AG04449 (cell line): ENCODE measurements at regions of chr12 and their contacts with region 1.

Region 1: DNA sequence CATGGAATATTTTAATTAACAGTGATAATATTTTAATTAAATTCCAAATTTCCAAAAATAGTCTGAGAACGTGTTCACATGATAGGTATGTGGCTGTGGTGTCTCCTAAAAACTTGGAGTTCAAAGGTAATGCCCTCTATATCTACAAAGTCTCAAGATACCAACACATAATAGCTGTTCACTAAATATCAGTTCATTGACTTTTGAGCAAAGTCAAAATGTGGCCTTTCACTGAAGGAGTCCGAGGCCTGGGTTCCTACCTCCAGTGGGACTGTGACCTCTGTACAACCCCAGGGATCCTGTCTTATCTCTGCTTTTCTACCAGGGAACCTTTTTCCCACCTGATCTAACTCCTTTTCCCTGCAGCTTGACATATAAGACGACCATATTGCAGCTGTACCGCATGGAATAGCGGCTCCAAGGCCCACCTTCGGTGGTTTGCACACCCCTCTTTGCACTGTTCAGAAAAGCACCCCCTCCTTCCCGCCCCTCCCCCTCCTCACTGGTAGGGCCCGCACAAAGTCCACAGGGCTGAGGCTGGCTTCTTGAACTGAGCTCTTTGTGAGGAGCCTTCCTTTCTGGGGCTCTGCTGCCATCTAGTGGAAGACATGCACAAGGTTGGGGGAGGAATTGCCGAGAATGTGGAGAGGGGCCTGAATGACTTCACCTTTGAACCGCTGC is 3.1 kb downstream of the CCND2 start:
- DNase-seq: peak; percentile 7
- H3K4me3 ChIP-seq: no peak overlapping the region
- CTCF ChIP-seq: peak; percentile 89

Region 2: DNA sequence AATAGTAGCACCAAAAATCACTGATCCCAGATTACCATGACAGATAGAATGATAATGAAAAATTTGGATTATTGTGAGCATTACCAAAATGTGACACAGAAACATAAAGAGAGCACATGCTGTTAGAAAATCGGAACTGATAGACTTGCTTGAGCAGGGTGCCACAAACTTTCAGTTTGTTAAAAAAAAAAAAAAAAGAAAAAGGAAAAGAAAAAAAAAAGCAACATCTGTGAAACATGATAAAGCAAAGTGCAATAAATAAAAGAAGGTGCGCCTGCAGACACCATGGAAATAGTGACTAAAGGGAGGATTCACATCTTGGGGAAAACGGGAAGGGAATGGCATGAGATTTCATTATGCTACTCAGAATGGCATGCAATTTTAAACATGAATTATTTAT is 396.8 kb before region 1 on chr12:
- CTCF ChIA-PET with region 1: interaction called, 241 read pairs
- POLR2A ChIA-PET with region 1: no interaction called
- DNase-seq: no peak
- H3K4me3 ChIP-seq: no peak overlapping the region
- CTCF ChIP-seq: no peak

Region 3: DNA sequence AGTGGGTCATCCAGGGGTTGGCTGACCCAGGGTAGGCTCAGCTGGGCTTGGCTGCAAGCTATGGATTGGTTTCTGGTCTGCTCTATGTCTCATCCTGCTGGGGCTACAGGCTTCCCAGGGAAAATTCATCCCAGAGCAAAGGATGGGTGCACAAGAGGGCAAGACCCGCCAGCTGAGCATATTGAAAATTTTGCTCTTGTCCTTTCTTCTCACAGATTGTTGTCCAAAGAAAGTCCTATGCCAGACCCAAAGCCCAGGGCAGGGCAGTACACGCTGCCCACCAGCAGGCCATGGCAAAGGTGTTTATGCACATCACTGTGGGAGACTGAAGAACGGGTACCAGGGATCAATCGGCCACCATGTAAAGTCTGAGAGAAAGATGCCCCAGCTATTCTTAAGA is 308.1 kb before region 1 on chr12:
- CTCF ChIA-PET with region 1: interaction called, 11 read pairs
- POLR2A ChIA-PET with region 1: no interaction called
- DNase-seq: no peak
- H3K4me3 ChIP-seq: no peak overlapping the region
- CTCF ChIP-seq: no peak

Region 4: GRCh38 chr12:4037747-4038312 is 238.8 kb before region 1 on chr12:
- CTCF ChIA-PET with region 1: interaction called, 64 read pairs
- POLR2A ChIA-PET with region 1: no interaction called
- DNase-seq: no peak
- H3K4me3 ChIP-seq: no peak overlapping the region
- CTCF ChIP-seq: peak; percentile 46

Region 5: GRCh38 chr12:4112734-4113325 is 163.8 kb before region 1 on chr12:
- CTCF ChIA-PET with region 1: interaction called, 102 read pairs
- POLR2A ChIA-PET with region 1: no interaction called
- DNase-seq: no peak
- H3K4me3 ChIP-seq: no peak overlapping the region
- CTCF ChIP-seq: no peak

Region 6: GRCh38 chr12:4261655-4262054 is 15.0 kb before region 1 on chr12:
- CTCF ChIA-PET with region 1: interaction called, 31 read pairs
- POLR2A ChIA-PET with region 1: no interaction called
- DNase-seq: no peak
- H3K4me3 ChIP-seq: no peak overlapping the region
- CTCF ChIP-seq: no peak

Region 7: GRCh38 chr12:4293299-4293965 is 16.8 kb after region 1 on chr12:
- CTCF ChIA-PET with region 1: interaction called, 19 read pairs
- POLR2A ChIA-PET with region 1: no interaction called
- DNase-seq: no peak
- H3K4me3 ChIP-seq: no peak overlapping the region
- CTCF ChIP-seq: no peak